ENCODE measurements at regions of chr3 and their contacts with region 1.

Region 1: DNA sequence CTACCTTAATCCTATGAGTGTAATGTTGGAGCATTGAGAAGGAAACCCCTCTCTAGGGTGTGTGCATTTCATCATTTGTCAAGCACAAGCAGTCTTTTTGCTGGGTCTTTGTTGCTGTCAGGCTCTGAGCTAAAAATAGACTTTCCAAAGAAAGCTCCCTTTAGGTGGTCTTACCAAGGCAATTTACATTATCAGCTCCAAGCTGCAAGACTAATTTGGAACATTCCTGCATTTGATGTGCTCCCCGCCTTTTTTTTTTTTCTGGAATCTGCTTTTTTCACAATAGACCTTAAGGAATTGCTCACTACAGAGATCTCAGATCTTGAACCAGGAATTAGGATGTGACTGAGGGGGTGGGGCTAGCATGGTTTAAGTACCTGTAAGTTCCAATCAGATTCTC is 60.6 kb upstream of the STAC start:
- DNase-seq: no peak
- H3K4me3 Mint-ChIP-seq: no peak overlapping the region
- H3K27ac Mint-ChIP-seq: no peak overlapping the region
- H3K4me1 Mint-ChIP-seq: peaks cover 19% of the 10 kb centered on the region
- H3K27me3 Mint-ChIP-seq: no peaks in the 10 kb centered on the region
- CTCF ChIP-seq: no peak

Region 2: GRCh38 chr3:36332139-36332538 is 12.5 kb after region 1 on chr3:
- CTCF ChIA-PET with region 1: interaction called, 3 read pairs
- intact Hi-C with region 1: loop called (anchors 1 kb)
- DNase-seq: no peak
- H3K4me3 Mint-ChIP-seq: no peak overlapping the region
- H3K27ac Mint-ChIP-seq: no peak overlapping the region
- H3K4me1 Mint-ChIP-seq: peaks cover 12% of the 10 kb centered on the region
- H3K27me3 Mint-ChIP-seq: no peaks in the 10 kb centered on the region
- CTCF ChIP-seq: no peak